Heart right ventricle (tissue), 16 donors: ENCODE measurements at regions of chr17 and their contacts with region 1.

Region 1: GRCh38 chr17:4891411-4892342 is 7.7 kb upstream of the C17orf107 start:
- DNase-seq: no peak
- ATAC-seq: no peak
- H3K4me3 ChIP-seq: no peak overlapping the region
- H3K27ac ChIP-seq: no peak overlapping the region
- H3K4me1 ChIP-seq: no peaks in the 10 kb centered on the region
- H3K27me3 ChIP-seq: no peaks in the 10 kb centered on the region
- CTCF ChIP-seq: no peak

Region 2: DNA sequence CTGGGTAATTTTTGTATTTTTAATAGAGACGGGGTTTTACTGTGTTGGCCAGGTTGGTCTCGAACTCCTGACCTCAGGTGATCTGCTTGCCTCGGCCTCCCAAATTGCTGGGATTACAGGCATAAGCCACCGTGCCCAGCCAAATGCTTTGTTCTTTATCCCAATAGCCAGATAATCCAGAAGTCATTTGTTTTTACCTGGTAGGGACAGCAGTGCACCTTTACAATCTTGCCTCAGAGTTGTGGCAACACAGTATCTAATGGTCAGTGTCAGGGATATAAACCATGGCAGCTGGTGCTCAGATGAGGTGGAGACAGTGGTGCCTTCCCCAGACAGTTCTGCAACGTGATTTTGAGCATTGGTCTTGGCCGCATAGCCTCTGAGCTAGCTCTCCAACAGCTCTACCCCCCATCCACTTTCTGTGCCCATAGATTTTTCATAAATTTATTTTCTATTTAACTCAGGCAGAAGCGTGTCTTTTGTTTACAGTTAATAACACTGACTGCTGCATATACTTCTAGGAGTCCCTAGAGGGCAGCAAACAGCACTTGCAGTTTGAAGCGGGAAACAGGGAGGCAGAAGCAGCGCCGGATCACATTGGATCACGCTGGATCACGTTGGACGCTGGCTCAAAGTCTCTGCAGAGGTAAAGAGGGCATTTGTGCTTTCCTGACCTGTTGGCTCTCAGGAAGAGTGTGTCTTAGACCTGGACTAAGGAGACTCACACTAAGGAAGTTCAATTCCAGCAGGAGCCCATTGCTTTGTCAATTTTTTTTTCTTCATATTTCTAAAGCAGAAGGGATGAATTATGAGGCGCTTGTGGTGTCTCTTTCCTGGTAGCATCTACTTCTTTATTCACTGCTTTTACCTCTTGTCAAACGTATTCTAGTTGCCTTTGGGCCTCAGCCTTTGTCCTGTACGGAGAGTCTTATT is 326.2 kb before region 1 on chr17:
- intact Hi-C with region 1: loop called in 1 of 10 experiments (anchors 5 kb)
- DNase-seq: peak in 1 of 2 donors; percentile 68
- ATAC-seq: peak; percentile 64 to 93 (median 84)
- H3K4me3 ChIP-seq: no peak overlapping the region
- H3K27ac ChIP-seq: peak overlapping the region in 3 of 10 donors; percentile 19 to 43 (median 32)
- H3K4me1 ChIP-seq: peaks cover 0 to 32% (median 15%) of the 10 kb centered on the region in 9 donors
- H3K27me3 ChIP-seq: no peaks in the 10 kb centered on the region
- CTCF ChIP-seq: peak; percentile 75 to 87 (median 81)

Region 3: DNA sequence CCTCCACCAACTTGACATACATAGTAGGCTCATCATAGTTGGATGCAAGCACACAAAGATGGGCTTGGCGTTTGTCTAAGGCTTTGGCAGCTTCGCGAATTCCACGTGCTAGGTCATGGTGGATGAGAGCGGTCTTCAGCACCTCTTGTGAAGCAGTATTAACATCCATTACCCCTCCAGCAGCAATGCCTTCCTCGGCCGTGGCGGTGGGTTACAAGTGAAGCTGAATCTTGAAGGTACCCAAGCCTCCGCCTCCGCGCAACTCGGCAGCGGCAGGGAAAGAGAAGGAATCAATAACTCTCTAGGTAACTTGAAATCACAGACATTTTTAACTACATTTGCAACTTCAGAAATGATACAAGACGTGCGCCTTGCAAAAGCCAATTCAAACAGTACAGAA is 186.7 kb before region 1 on chr17:
- intact Hi-C with region 1: loop called in 5 of 10 experiments (anchors 1 to 10 kb)
- DNase-seq: no peak
- ATAC-seq: no peak
- H3K4me3 ChIP-seq: no peak overlapping the region
- H3K27ac ChIP-seq: no peak overlapping the region
- H3K4me1 ChIP-seq: peaks cover 0 to 34% (median 14%) of the 10 kb centered on the region in 9 donors
- H3K27me3 ChIP-seq: no peaks in the 10 kb centered on the region
- CTCF ChIP-seq: no peak

Region 4: GRCh38 chr17:4709794-4710692 is 181.6 kb before region 1 on chr17 and contains the start of gene ARRB2:
- intact Hi-C with region 1: loop called in 5 of 10 experiments (anchors 1 to 10 kb)
- DNase-seq: peak; percentile 97 to 99
- ATAC-seq: peak; percentile 94 to 97 (median 95)
- H3K4me3 ChIP-seq: peak within 1 kb of the TSS; percentile 12 to 85 (median 72)
- H3K27ac ChIP-seq: peak within 1 kb of the TSS in 9 of 10 donors; percentile 53 to 99 (median 80)
- H3K4me1 ChIP-seq: peaks cover 4 to 47% (median 13%) of the 10 kb centered on the region in 9 donors
- H3K27me3 ChIP-seq: no peaks in the 10 kb centered on the region
- CTCF ChIP-seq: peak; percentile 41 to 79 (median 57)
- total RNA-seq, gene ARRB2: 10.8 to 53.5 (median 17.2) TPM

Region 5: DNA sequence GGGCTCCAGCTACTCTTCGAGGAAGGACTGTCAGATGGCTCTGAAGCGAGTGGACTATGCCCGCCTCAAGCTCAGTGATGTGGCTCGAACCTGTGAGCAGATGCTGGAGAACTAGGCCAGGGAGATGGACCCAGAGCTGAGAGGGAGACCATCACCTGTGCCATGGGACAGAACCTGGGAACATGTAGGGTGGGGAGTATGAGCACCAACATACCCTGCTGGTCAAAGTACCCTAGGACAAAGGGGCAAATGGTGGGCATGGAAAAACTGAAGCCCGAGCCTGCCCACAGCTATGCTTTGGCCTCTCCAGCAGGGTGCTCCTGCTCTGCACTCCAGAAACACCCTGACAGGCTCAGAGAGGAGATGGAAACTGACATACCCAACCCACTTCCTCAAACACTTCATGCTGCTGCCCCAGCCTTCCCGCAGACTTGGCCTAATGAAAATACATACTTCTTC is 158.6 kb before region 1 on chr17:
- intact Hi-C with region 1: loop called in 9 of 10 experiments (anchors 1 to 10 kb)
- DNase-seq: no peak
- ATAC-seq: no peak
- H3K4me3 ChIP-seq: no peak overlapping the region
- H3K27ac ChIP-seq: peak overlapping the region in 5 of 10 donors; percentile 15 to 90 (median 39)
- H3K4me1 ChIP-seq: peaks cover 3 to 66% (median 15%) of the 10 kb centered on the region in 9 donors
- H3K27me3 ChIP-seq: peaks cover 0 to 10% (median 0%) of the 10 kb centered on the region in 7 donors
- CTCF ChIP-seq: peak in 2 of 9 donors; percentile 28 to 35

Region 6: GRCh38 chr17:4739122-4740024 is 152.3 kb before region 1 on chr17 and contains the starts of genes CXCL16 and ZMYND15:
- intact Hi-C with region 1: loop called in 8 of 10 experiments (anchors 5 to 10 kb)
- DNase-seq: peak; percentile 52 to 58
- ATAC-seq: peak; percentile 52 to 76 (median 66)
- H3K4me3 ChIP-seq: peak within 1 kb of the TSS; percentile 50 to 95 (median 84)
- H3K27ac ChIP-seq: peak within 1 kb of the TSS in 8 of 10 donors; percentile 1 to 82 (median 71)
- H3K4me1 ChIP-seq: peaks cover 2 to 48% (median 13%) of the 10 kb centered on the region in 9 donors
- H3K27me3 ChIP-seq: peaks cover 0 to 41% (median 8%) of the 10 kb centered on the region in 7 donors
- CTCF ChIP-seq: no peak
- total RNA-seq, gene CXCL16: 2.8 to 29.6 (median 4.2) TPM
- total RNA-seq, gene ZMYND15: 0.15 to 2.1 (median 0.38) TPM in 9 of 10 donors, not detected in the other

Region 7: DNA sequence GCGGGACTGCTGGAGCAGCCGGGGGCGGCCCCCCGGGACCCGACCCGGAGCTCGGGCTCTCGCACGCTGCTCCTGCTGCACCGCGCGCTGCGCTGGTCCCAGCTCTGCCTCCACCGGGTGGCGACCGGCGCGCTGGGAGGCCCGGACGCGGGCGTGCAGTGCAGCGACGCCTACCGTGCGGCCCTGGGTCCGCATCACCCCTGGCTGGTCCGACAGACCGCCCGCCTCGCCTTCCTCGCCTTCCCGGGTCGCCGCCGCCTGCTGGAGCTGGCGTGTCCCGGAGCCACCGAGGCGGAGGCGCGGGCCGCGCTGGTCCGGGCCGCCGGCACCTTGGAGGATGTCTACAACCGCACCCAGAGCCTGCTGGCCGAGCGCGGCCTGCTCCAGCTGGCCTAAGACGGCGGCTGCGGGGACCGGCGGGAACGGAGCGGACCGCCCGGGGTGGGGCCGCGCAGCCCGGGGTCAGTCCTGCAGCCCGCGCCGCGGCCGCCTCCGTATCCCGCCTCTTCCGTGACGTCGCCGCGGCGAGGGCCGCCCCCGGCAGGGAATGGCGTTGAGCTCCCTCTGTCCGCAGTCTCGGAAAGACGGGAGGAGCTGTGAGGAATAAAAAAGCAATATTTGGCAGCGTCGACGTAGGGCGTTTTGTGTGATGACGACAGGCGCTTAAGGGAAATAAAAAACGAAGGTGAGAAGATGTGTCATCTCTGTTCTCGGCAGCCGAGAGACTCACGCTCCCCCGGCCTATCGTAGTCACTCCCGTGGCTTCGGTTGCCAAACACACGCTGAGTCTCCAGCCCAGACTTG is 101.6 kb before region 1 on chr17:
- intact Hi-C with region 1: loop called (anchors 1 to 5 kb)
- DNase-seq: peak; percentile 85 to 87
- ATAC-seq: peak; percentile 93 to 97 (median 95)
- H3K4me3 ChIP-seq: peak overlapping the region; percentile 19 to 91 (median 74)
- H3K27ac ChIP-seq: peak overlapping the region; percentile 92 to 99 (median 97)
- H3K4me1 ChIP-seq: peaks cover 16 to 47% (median 43%) of the 10 kb centered on the region in 9 donors
- H3K27me3 ChIP-seq: peaks cover 0 to 39% (median 8%) of the 10 kb centered on the region in 7 donors
- CTCF ChIP-seq: peak; percentile 59 to 87 (median 81)